Heart left ventricle (tissue), 16 donors: ENCODE measurements at regions of chr20 and their contacts with region 1.

Region 1: DNA sequence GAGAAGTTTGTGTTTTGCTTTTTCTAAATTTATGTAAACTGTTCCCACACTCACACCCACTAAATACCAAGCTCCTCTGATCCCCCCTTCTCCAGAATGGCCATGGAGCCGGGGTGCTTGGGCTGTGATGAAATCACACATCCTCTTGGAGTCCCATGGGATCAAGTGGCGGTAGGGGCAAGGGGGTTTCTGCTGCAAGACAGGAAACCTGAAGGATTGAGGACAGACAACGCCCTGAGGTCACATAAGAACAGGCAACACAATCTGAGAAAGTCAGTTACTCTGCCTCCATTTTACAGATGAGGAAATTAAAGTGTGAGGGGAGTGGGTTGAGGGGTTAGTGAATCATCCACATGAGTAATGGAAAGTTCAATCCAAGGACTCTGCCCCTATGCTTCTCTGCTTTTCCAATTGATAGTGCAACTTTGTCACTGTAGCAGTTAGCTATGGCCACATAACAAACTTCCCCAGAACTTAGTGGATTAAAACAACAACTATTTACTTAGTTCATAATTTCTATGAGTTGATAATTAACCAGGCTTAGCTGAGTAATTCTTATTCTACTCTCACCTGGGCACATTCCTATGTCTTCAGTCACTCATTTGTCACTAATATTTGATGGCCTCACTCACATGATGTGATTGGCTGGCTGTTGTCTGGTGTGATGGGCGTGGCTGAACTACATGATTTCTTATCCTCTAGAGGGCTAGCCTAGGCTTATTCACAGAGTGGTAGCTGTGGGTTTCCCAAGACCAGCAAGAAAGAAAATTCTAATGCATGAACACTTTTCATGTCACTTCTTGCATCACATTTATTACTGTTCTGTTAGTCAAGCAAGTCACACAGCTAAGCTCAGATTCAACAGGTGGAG is 311.1 kb upstream of the RNF24 start:
- DNase-seq: peak in 1 of 5 donors; percentile 66
- ATAC-seq: peak in 2 of 4 donors; percentile 39 to 60
- H3K4me3 ChIP-seq: no peak overlapping the region
- H3K27ac ChIP-seq: peak overlapping the region in 3 of 12 donors; percentile 14 to 25 (median 24)
- H3K4me1 ChIP-seq: peaks cover 0 to 12% (median 0%) of the 10 kb centered on the region in 12 donors
- H3K27me3 ChIP-seq: no peaks in the 10 kb centered on the region
- CTCF ChIP-seq: no peak
- POLR2A ChIP-seq: no peak

Region 2: DNA sequence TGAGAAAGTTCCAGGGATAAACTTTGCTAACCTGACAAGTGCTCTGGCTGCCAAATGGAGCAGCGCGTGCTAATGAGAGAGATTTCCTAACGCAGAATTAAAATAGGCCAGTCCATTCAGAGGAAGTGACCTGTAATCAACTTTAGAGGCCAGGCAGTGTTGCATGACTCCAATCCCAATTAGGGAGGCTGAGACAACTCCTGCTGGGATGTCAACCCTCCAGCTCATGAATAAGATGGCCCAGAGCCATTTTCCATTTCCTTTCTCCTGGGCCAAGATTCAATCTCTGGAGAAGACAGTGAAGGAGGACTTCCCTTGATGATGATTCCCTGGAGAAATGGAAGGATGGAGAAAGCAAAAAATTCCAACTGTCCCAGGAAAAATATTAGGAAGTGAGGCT is 69.6 kb before region 1 on chr20:
- intact Hi-C with region 1: loop called in 1 of 10 experiments (anchors 10 kb)
- DNase-seq: peak in 1 of 5 donors; percentile 39
- ATAC-seq: peak in 2 of 4 donors; percentile 51 to 75
- H3K4me3 ChIP-seq: no peak overlapping the region
- H3K27ac ChIP-seq: no peak overlapping the region
- H3K4me1 ChIP-seq: peaks cover 0 to 9% (median 0%) of the 10 kb centered on the region in 12 donors
- H3K27me3 ChIP-seq: peaks cover 0 to 14% (median 0%) of the 10 kb centered on the region in 9 donors
- CTCF ChIP-seq: no peak
- POLR2A ChIP-seq: no peak